ENCODE measurements at regions of chr2 and their contacts with region 1.

Region 1: DNA sequence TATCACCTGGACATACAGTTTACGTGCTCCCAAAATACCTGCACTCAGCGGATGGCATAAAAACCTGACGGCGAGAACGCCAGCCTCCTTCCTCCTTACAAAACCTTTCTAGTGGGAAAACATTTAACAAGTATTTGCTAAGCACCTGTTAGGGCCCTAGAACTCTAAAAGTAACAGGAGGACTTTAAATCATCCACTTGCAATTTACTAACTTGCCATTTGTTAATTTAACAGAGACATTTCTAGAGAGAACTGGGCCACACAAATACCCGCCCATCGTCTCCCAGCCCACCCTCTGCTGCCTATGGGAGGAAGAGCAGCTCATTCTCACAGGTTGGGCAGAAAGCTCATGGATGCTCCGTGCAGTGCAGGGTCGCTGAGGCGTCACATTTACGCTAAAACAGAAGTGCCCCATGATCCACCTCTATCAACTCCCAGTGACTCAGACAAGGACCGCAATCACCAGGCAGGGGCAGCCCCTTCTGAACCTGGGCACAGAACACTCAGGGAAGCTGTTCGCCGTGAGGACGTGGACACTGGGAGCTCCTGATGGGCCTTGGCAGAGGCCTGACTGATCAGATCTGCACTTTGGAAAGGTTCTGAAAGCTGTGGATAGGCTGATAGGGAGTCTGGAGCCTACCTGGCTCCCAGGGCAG is 106.9 kb downstream of the HDAC4 start:
- DNase-seq: no peak
- ATAC-seq: peak in 5 of 8 donors; percentile 4 to 29 (median 12)
- H3K4me3 ChIP-seq: no peak overlapping the region
- H3K27ac ChIP-seq: peak overlapping the region in 8 of 10 donors; percentile 9 to 67 (median 50)
- H3K4me1 ChIP-seq: peaks cover 9 to 94% (median 80%) of the 10 kb centered on the region in 9 donors
- H3K27me3 ChIP-seq: no peaks in the 10 kb centered on the region
- CTCF ChIP-seq: no peak

Region 2: GRCh38 chr2:239223310-239224198 is 70.3 kb before region 1 on chr2:
- intact Hi-C with region 1: loop called in 1 of 10 experiments (anchors 5 kb)
- DNase-seq: peak in 1 of 2 donors; percentile 40
- ATAC-seq: peak in 6 of 8 donors; percentile 10 to 53 (median 25)
- H3K4me3 ChIP-seq: no peak overlapping the region
- H3K27ac ChIP-seq: peak overlapping the region in 9 of 10 donors; percentile 40 to 89 (median 86)
- H3K4me1 ChIP-seq: peaks cover 38 to 88% (median 76%) of the 10 kb centered on the region in 9 donors
- H3K27me3 ChIP-seq: no peaks in the 10 kb centered on the region
- CTCF ChIP-seq: no peak

Region 3: DNA sequence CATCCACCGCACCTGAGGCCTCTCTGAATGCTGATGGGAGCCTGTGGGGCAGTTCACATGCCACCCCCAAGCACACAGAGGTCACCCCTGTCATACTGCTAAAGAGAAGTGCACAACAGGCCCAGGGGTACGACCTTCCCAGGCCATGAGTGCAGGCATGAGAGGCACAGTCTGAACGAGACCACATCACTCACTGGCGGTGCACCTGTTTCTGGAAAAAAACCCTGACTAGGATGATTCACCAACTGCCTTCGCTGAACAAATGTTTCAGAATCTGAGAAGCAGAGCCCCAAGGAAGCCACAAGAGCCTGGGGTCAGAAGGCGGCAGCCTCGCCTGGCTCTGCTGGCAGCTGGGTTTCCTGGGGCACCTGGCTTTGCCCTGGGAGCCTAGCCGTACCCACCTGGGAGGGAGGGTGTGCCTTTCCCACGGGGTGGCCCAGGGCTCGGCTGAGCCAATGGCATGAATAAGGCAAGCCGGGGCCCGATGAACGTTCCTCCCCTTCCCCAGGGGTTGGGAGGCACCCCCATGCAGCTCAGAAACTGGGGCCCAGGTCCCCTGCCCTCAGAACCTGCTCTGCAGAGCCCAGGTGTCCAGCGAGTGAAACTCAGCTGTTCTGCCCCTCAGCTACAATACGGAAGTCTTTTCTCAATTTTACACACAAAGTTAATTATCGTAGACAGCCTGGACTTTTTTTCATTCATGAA is 33.1 kb after region 1 on chr2:
- intact Hi-C with region 1: loop called in 1 of 10 experiments (anchors 2 kb)
- DNase-seq: peak in 1 of 2 donors; percentile 3
- ATAC-seq: no peak
- H3K4me3 ChIP-seq: no peak overlapping the region
- H3K27ac ChIP-seq: peak overlapping the region; percentile 85 to 96 (median 92)
- H3K4me1 ChIP-seq: peaks cover 25 to 66% (median 53%) of the 10 kb centered on the region in 9 donors
- H3K27me3 ChIP-seq: no peaks in the 10 kb centered on the region
- CTCF ChIP-seq: no peak

Region 4: GRCh38 chr2:239605976-239606375 is 312.1 kb after region 1 on chr2:
- intact Hi-C with region 1: no loop called
- DNase-seq: no peak
- ATAC-seq: no peak
- H3K4me3 ChIP-seq: no peak overlapping the region
- H3K27ac ChIP-seq: no peak overlapping the region
- H3K4me1 ChIP-seq: peaks cover 0 to 33% (median 0%) of the 10 kb centered on the region in 9 donors
- H3K27me3 ChIP-seq: peaks cover 0 to 68% (median 51%) of the 10 kb centered on the region in 7 donors
- CTCF ChIP-seq: no peak

Measured in heart right ventricle (tissue), 16 donors.